ENCODE measurements at regions of chr3 and their contacts with region 1.

Region 1: GRCh38 chr3:112293368-112294321 is at the start of gene SLC9C1:
- DNase-seq: peak; percentile 80 to 89 (median 86)
- H3K4me3 ChIP-seq: peak within 1 kb of the TSS in 5 of 7 experiments; percentile 42 to 77 (median 55)
- H3K27ac ChIP-seq: peak within 1 kb of the TSS in 1 of 2 experiments; percentile 46
- H3K4me1 ChIP-seq: peaks cover 0 to 18% (median 10%) of the 10 kb centered on the region in 4 experiments
- H3K27me3 ChIP-seq: no peaks in the 10 kb centered on the region

Region 2: DNA sequence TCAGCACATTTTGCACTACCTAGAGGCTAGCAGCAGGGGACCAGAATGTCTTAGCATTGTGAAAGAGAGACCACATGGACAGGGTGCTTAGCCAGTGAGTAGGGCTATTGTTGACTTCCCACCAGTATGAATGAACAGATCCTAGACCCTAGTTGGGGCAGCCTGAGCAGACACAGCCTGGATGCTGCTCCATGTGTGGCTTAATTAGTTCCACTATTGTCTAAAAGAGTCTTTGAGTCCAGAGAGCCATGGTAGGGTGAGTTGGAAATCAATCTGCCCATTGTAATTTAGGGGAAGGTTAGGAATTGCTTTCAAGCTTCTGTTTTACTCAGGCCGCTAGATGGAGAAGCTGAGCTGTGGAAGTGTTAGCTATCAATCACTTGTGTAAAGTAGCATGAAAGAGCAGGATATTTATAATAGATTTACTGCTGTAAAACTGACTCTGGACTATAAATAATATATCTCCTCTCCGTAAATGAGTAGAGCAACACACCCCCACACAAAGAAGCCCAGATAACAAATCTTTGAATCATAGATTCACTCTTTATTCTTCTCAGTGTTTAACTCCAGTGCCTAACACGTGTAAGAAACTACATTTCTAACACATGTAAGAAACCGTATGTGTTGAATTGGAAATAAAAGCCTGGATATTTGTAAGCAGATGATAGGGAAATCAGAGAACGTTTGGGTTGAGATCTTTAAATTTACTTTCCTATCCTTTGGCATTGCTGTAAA is 156.5 kb before region 1 on chr3:
- CTCF ChIA-PET with region 1: interaction called, 23 read pairs
- POLR2A ChIA-PET with region 1: interaction called, 3 read pairs
- DNase-seq: peak; percentile 52 to 76 (median 76)
- H3K4me3 ChIP-seq: no peak overlapping the region
- H3K27ac ChIP-seq: no peak overlapping the region
- H3K4me1 ChIP-seq: peaks cover 13 to 58% (median 40%) of the 10 kb centered on the region in 4 experiments
- H3K27me3 ChIP-seq: no peaks in the 10 kb centered on the region

Region 3: DNA sequence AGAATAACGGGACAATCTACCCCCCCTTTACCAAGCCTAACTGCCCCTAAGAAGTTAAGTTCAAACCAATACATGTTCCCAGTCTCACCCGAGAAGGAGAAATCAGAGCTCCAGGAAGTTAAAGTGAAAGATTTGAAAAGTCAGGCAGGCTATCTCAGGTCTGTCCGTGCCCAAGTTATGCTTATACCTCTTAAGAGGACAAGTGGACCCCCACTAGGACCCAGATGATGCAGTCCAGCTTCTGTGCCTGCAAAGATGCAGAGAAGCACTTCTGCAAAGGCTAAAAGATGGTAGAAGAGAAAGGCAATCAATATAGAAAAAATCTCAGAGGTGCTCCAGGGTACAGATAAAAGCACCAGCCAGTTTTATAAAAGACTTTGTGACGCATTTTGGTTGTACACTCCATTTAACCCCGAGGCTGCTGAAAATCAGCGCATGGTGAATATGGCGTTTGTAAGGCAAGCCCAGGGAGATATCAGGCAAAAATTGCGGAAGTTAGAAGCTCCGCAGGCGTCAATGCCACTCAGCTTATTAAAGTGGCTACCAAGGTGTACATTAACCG is 10.2 kb after region 1 on chr3:
- CTCF ChIA-PET with region 1: interaction called, 28 read pairs
- POLR2A ChIA-PET with region 1: no interaction called
- DNase-seq: peak; percentile 39 to 85 (median 75)
- H3K4me3 ChIP-seq: peak overlapping the region in 5 of 7 experiments; percentile 52 to 80 (median 76)
- H3K27ac ChIP-seq: no peak overlapping the region
- H3K4me1 ChIP-seq: peaks cover 9 to 21% (median 14%) of the 10 kb centered on the region in 4 experiments
- H3K27me3 ChIP-seq: no peaks in the 10 kb centered on the region

Region 4: DNA sequence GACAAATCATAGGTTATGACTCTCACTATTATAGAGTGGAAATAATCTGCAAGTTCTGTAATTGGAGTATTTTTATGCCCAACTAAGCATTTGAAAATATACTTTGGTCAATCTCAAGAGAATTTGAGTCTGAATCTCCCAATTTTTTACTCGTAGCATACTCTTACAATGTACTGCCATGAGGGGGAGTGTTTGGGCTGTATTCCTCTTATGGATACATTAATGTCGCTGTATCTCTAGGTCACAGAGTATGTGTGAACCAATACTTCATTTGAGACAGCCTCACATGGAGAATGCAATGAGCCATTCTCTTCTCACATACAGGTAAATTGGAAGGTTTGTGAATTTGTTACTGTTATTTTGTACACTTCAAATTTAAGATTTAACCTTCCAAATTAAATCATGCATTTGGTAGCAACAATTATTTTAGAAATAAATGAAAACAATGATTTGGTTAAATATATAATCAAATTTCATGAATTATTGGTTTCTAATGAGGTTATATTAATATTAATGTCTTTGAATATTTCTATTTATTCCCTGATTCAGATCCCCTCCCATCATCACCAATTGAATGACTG is 33.8 kb after region 1 on chr3:
- CTCF ChIA-PET with region 1: interaction called, 13 read pairs
- POLR2A ChIA-PET with region 1: interaction called, 4 read pairs
- DNase-seq: peak; percentile 72 to 88 (median 85)
- H3K4me3 ChIP-seq: no peak overlapping the region
- H3K27ac ChIP-seq: no peak overlapping the region
- H3K4me1 ChIP-seq: peaks cover 0 to 1% (median 0%) of the 10 kb centered on the region in 4 experiments
- H3K27me3 ChIP-seq: no peaks in the 10 kb centered on the region

Region 5: DNA sequence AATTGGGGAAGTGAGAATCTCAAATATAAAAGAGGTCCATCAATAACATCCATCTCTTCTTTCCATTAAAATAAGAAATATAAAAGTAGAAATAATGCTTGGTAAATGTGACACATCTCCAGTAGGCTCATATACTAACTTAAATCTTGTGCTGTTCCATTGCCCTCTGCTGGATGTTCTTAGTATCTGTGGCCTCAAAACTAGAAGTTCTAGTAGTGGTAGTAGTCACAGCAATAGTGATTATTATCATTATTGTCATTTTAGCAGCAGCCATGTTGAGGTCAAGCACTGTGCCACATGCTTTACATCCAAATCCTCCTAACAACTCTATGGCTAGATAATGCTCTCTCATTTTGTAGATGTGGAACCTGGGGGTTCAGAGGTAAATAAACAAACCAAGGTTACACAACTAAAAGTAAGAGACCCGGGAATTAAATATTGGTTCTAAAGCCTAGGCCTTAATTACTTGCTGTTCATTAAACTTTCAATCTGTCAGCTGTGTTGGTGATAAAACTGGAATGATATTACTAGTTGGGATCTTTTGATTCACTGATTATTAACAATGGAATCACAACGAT is 225.9 kb after region 1 on chr3:
- CTCF ChIA-PET with region 1: interaction called, 15 read pairs
- POLR2A ChIA-PET with region 1: no interaction called
- DNase-seq: peak; percentile 82 to 89 (median 87)
- H3K4me3 ChIP-seq: no peak overlapping the region
- H3K27ac ChIP-seq: no peak overlapping the region
- H3K4me1 ChIP-seq: peaks cover 4 to 15% (median 5%) of the 10 kb centered on the region in 4 experiments
- H3K27me3 ChIP-seq: no peaks in the 10 kb centered on the region

Region 6: DNA sequence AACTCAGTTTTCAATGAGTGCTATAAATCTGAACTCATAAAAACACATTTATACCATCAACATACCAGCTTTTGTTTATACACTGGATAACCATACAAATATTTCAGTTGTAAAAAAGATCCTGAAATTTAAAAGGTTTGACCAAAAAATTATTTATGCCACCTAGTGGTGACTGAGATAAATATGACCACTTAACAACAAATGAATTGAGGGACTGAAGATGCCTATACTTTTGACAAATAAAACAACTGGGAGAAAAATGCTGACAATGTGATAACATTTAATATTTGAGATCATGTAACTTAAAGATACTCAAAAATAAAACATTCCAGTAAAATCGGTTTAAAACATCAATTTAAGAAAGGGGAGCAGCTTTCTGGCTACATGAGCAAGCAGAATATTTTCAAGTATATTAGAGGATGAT is 237.7 kb after region 1 on chr3:
- CTCF ChIA-PET with region 1: interaction called, 20 read pairs
- POLR2A ChIA-PET with region 1: no interaction called
- DNase-seq: peak; percentile 55 to 79 (median 69)
- H3K4me3 ChIP-seq: no peak overlapping the region
- H3K27ac ChIP-seq: no peak overlapping the region
- H3K4me1 ChIP-seq: no peaks in the 10 kb centered on the region
- H3K27me3 ChIP-seq: no peaks in the 10 kb centered on the region

Measured in common myeloid progenitor, CD34-positive (primary cell).